Heart right ventricle (tissue), 16 donors: ENCODE measurements at regions of chr17 and their contacts with region 1.

Region 1: DNA sequence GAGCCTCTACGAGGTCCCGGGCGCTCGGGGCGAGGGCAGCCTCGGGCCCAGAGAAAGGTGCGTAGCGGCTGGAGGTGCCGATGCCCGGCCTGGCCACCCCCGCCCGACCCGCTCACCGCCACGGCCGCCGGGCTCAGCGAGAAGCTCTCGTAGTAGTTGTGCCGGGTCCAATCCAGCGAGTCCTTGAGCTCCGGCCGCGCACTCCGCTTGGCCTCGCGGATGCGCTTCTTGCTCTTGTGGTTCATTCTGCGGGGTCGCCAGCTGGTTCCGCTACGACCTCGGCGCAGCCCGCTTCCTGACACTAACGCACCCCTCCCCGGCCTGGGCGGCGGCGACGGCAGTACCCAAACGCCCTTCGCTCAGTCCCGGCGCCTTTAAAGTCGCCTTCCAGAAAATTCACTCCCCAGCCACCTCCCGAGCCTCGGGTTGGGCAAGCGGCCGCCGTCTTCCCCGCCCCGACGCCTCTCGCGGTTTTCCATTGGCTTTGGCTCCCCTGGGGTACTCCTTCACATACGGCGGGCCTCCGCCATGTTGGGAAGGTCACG is at the start of gene JMJD6:
- DNase-seq: peak; percentile 96 to 97
- ATAC-seq: peak; percentile 93 to 97 (median 95)
- H3K4me3 ChIP-seq: peak within 1 kb of the TSS; percentile 72 to 100 (median 88)
- H3K27ac ChIP-seq: peak within 1 kb of the TSS; percentile 96 to 100 (median 99)
- H3K4me1 ChIP-seq: peaks cover 13 to 78% (median 64%) of the 10 kb centered on the region in 9 donors
- H3K27me3 ChIP-seq: no peaks in the 10 kb centered on the region
- CTCF ChIP-seq: no peak
- total RNA-seq, gene JMJD6: 34.6 to 79.3 (median 43.2) TPM

Region 2: GRCh38 chr17:76540381-76541300 is 185.7 kb before region 1 on chr17:
- intact Hi-C with region 1: loop called in 1 of 10 experiments (anchors 10 kb)
- DNase-seq: peak; percentile 90 to 97
- ATAC-seq: peak; percentile 88 to 96 (median 94)
- H3K4me3 ChIP-seq: peak overlapping the region in 9 of 10 donors; percentile 35 to 53 (median 43)
- H3K27ac ChIP-seq: peak overlapping the region; percentile 58 to 85 (median 78)
- H3K4me1 ChIP-seq: peaks cover 45 to 84% (median 57%) of the 10 kb centered on the region in 9 donors
- H3K27me3 ChIP-seq: peaks cover 0 to 66% (median 0%) of the 10 kb centered on the region in 7 donors
- CTCF ChIP-seq: peak in 8 of 9 donors; percentile 6 to 47 (median 30)

Region 3: DNA sequence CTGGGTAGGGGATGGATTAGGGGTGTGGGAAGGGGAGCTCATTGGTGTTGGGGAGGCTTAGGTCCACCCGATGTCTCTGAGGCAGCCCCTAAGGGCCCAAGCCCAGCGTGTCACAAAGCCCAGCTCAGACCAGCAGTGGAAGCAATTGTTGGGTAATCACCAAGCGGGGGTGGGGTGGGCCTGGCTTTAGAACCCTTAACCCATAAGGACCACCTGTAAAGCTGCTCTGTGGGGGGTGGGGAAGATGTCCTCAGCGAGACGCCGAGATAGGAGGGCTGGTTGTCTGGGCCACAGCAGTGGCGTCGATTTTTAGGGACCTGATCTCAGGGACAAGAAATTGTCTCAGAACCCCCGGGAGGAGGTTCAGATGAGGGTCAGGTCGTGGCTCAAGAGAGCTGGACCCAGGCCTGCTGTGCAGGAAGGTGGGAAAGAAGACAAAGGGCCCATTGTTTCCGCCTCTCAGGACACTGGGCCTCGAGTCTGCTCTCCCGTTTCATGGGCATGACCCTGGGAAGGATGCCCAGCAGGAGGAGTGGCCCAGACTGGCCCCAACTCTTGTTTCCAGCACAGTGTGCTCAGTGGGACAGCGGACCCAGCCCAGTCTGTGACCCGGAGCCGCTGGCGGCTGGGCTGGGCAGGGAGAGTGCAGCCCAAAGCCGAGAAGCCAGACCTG is 156.6 kb before region 1 on chr17:
- intact Hi-C with region 1: no loop called
- DNase-seq: peak in 1 of 2 donors; percentile 42
- ATAC-seq: peak; percentile 34 to 82 (median 63)
- H3K4me3 ChIP-seq: no peak overlapping the region
- H3K27ac ChIP-seq: no peak overlapping the region
- H3K4me1 ChIP-seq: peaks cover 0 to 35% (median 17%) of the 10 kb centered on the region in 9 donors
- H3K27me3 ChIP-seq: no peaks in the 10 kb centered on the region
- CTCF ChIP-seq: no peak

Region 4: GRCh38 chr17:76597728-76598474 is 128.4 kb before region 1 on chr17:
- intact Hi-C with region 1: no loop called
- DNase-seq: no peak
- ATAC-seq: peak in 3 of 8 donors; percentile 52 to 63 (median 52)
- H3K4me3 ChIP-seq: no peak overlapping the region
- H3K27ac ChIP-seq: peak overlapping the region in 1 of 10 donors; percentile 29
- H3K4me1 ChIP-seq: peaks cover 0 to 43% (median 18%) of the 10 kb centered on the region in 9 donors
- H3K27me3 ChIP-seq: no peaks in the 10 kb centered on the region
- CTCF ChIP-seq: no peak

Region 5: DNA sequence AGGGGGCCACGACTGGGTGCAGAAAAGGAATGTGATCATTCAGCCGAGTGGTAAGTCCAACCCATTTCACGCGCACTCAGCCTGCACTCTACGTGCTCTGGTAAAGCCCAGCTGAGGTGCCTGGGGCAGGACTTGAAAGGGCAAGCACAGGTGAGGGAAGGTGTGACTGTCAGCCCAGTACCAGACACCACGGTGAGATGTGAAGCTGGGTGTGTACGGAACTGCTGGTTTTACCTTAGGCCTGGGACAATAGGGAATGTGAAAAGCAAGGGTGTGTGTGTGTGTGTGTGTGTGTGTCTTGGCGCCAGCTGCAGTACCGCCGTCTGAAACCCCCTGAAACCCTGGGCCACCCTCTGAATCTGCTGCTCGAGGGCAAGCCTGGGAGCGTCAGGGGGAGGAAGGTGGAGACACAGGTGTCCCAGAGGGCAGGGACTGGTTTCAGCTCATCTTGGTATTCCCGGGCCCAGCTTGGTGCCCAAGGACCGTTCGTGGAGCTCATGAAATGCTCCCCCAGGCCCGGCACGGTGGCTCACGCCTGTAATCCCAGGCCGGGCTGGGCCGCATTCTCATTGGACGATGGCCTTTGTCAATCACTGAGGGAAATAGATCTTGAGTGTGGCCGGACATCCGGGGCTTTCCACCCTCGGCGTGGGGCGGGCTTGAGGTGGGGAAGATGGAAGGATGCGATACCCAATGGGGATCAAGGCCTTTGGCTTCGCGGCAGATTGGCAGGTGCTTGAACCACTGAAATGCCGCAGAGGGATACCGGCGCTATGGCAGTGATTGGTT is 55.0 kb before region 1 on chr17:
- intact Hi-C with region 1: loop called in 1 of 10 experiments (anchors 10 kb)
- DNase-seq: peak; percentile 99 to 100
- ATAC-seq: peak; percentile 96 to 99 (median 98)
- H3K4me3 ChIP-seq: peak overlapping the region; percentile 29 to 92 (median 64)
- H3K27ac ChIP-seq: peak overlapping the region; percentile 70 to 95 (median 89)
- H3K4me1 ChIP-seq: peaks cover 3 to 26% (median 21%) of the 10 kb centered on the region in 9 donors
- H3K27me3 ChIP-seq: no peaks in the 10 kb centered on the region
- CTCF ChIP-seq: no peak

Region 6: GRCh38 chr17:76781056-76781982 is 55.0 kb after region 1 on chr17:
- intact Hi-C with region 1: no loop called
- DNase-seq: no peak
- ATAC-seq: peak in 2 of 8 donors; percentile 20 to 64
- H3K4me3 ChIP-seq: no peak overlapping the region
- H3K27ac ChIP-seq: no peak overlapping the region
- H3K4me1 ChIP-seq: no peaks in the 10 kb centered on the region
- H3K27me3 ChIP-seq: no peaks in the 10 kb centered on the region
- CTCF ChIP-seq: no peak

Region 7: DNA sequence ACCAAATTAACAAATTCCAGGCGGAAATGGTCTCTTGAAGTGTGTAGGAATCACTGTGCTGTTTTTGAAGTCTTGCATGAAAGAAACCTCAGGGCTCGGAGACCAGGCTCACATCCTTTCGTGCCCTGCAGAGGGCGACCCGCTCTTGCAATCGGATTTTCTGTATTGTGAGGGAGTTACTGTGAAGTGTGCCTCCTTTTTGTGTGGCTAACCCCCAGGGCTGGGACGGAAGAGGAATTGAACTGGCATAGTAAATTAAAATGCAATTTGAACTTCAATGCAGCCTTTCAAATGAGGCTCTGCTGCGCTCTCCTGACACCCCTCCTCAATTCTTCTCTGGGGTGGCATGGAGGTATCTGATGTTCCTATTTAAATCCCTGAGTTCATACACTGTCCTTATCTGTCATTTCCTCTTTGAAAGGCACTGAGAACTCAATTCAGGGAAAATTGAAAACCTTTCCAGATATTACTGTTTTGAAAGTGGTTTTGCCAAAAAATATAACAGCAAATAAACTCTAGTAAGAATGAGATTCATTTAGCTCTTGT is 90.4 kb after region 1 on chr17:
- intact Hi-C with region 1: no loop called
- DNase-seq: no peak
- ATAC-seq: peak in 1 of 8 donors; percentile 51
- H3K4me3 ChIP-seq: no peak overlapping the region
- H3K27ac ChIP-seq: no peak overlapping the region
- H3K4me1 ChIP-seq: peaks cover 0 to 5% (median 0%) of the 10 kb centered on the region in 9 donors
- H3K27me3 ChIP-seq: peaks cover 0 to 17% (median 0%) of the 10 kb centered on the region in 7 donors
- CTCF ChIP-seq: peak in 7 of 9 donors; percentile 42 to 68 (median 58)